ENCODE measurements at regions of chr22 and their contacts with region 1.

Region 1: DNA sequence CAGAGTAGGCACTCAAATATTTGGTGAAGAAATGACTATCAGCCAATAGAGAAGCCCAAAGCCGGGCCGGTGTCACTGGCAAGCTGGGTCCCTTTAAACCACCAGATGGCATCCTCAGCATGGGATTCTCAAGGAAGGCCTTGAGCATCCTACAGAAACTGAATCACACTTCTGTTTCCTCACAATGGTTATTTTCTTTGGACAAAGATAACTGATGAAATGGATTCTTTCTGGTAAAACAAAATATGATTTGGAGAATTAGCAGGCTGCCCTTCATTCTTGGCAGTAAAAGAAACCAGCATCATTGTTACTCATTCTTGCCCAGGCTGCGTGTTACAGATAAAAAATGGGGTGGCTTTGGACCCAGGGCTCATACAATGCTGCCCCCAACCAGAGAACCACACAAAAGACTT is 30.3 kb upstream of the ASPHD2 start:
- DNase-seq: peak in 1 of 2 donors; percentile 71
- H3K4me3 ChIP-seq: no peak overlapping the region
- H3K27ac ChIP-seq: no peak overlapping the region
- H3K4me1 ChIP-seq: no peaks in the 10 kb centered on the region
- H3K27me3 ChIP-seq: no peaks in the 10 kb centered on the region
- CTCF ChIP-seq: peak; percentile 22 to 44 (median 30)

Region 2: DNA sequence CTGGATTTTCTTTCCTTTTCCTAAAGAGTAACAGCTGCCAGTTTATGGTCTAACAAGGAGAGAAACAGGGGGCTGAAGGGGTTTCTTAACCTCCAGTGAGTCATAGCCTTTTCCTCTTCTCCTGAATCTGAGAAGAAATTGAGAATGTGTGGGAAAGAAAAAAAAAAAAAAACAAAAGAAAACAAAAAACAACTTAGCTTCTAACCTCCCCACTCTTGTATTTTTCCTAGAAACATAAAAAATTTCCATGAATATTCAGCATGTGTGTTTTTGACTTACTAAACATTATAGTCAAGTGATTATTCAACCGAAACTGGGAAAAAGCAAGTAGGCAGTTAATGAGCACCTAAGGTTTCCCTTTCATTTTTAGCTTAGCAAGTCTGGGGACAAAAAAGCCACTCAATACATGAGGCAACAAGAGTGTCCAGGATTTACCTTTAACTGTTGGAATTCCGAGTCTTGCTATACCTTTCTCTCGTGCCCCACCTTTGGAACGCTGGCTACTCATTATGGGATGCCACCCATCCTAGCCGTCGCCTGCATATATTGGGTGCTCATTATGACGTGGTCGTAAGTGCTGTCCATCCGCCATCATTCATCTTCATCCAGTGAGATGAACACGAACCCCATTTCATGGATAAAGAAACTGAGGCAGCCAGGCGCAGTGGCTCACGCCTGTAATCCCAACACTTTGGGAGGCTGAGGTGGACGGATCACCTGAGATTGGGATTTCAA is 32.7 kb after region 1 on chr22:
- intact Hi-C with region 1: no loop called
- DNase-seq: no peak
- H3K4me3 ChIP-seq: no peak overlapping the region
- H3K27ac ChIP-seq: no peak overlapping the region
- H3K4me1 ChIP-seq: peaks cover 0 to 6% of the 10 kb centered on the region in 2 donors
- H3K27me3 ChIP-seq: no peaks in the 10 kb centered on the region
- CTCF ChIP-seq: no peak

Region 3: DNA sequence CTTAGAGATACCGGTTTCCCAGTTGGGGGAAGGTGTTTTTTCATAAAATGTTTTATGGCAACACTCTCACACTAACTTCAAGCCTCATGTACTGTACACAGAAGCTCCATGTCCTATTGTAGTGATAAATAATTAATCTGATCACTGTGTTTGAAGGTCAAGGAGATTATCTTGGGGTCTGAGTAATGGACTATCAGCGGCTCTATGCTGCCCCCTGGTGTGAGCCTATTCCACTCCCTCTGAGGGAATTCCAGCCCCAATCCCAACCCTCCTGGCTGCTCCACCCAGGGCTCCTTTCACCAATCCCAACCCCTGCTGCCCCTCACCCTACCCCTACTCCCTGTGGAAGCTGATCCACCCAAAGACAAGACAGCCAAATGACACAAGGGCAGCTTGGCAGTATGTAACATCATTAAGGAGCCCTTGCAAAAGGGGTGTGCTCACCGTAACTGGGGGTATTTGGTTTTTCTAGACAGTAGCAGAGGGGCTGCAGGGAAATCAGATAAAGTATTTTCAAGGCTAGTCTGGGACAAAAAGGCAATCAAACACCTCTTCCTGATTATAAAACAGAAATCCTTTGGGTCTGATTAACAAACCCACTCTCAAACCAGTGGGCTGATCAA is 62.6 kb after region 1 on chr22:
- intact Hi-C with region 1: loop called (anchors 2 kb)
- DNase-seq: no peak
- H3K4me3 ChIP-seq: no peak overlapping the region
- H3K27ac ChIP-seq: no peak overlapping the region
- H3K4me1 ChIP-seq: no peaks in the 10 kb centered on the region
- H3K27me3 ChIP-seq: no peaks in the 10 kb centered on the region
- CTCF ChIP-seq: peak; percentile 23 to 66 (median 40)

Measured in ascending aorta (tissue), 2 donors.